ENCODE measurements at regions of chr13 and their contacts with region 1.

Region 1: GRCh38 chr13:26186118-26186870 is 35.8 kb downstream of the RNF6 start:
- DNase-seq: peak; percentile 88
- H3K4me3 Mint-ChIP-seq: peak overlapping the region; percentile 88
- H3K27ac Mint-ChIP-seq: peak overlapping the region; percentile 95
- H3K4me1 Mint-ChIP-seq: peaks cover 21% of the 10 kb centered on the region
- H3K27me3 Mint-ChIP-seq: no peaks in the 10 kb centered on the region

Region 2: GRCh38 chr13:25301347-25302047 is 884.8 kb before region 1 on chr13 and contains the start of gene NUP58:
- CTCF ChIA-PET with region 1: no interaction called
- intact Hi-C with region 1: loop called (anchors 1 kb)
- DNase-seq: peak; percentile 96
- H3K4me3 Mint-ChIP-seq: peak within 1 kb of the TSS; percentile 94
- H3K27ac Mint-ChIP-seq: peak within 1 kb of the TSS; percentile 93
- H3K4me1 Mint-ChIP-seq: peaks cover 40% of the 10 kb centered on the region
- H3K27me3 Mint-ChIP-seq: no peaks in the 10 kb centered on the region
- total RNA-seq, gene NUP58: 91.9 to 93.0 TPM

Region 3: DNA sequence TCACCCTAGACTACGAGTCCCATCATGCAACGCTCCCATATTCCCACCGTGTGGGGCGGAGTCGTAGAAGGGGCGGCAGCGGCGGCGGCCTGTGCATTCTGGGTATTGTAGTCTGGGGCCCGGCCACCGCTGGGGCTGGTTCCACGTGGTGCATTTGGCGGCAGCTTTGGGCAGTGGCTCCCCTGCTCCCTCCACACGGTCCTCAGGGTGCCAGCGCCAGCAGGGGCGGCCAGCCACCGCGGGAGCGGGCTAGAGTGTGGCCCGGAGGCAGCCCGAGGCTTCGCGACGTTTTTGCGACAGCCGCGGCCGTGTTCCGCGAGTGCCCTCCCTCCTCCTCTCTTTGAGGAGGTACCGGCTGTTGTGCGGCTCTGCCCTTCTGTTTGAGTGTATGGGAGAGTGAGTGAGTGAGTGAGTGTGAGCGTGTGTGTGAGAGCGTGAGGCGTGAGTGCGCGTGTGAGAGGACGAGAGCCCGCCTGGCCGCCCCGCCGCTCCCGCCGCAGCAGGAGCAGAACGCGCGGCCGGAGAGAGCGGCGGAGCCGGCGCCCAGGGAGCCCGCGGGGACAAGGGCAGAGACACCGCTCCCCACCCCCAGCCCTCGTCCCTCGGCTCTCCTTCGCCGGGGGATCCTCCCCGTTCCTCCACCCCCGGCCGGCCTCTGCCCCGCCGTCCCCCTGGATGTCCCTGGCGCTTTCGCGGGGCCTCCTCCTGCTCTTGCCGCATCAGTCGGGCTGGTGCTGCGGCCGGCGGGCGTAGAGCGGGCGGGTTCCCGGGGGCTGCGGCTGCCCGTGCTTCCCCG is 67.7 kb after region 1 on chr13 and contains the start of gene CDK8:
- CTCF ChIA-PET with region 1: interaction called, 4 read pairs
- intact Hi-C with region 1: loop called (anchors 1 kb)
- DNase-seq: peak; percentile 89
- H3K4me3 Mint-ChIP-seq: peak within 1 kb of the TSS; percentile 87
- H3K27ac Mint-ChIP-seq: peak within 1 kb of the TSS; percentile 54
- H3K4me1 Mint-ChIP-seq: peaks cover 36% of the 10 kb centered on the region
- H3K27me3 Mint-ChIP-seq: no peaks in the 10 kb centered on the region
- total RNA-seq, gene CDK8: 15.4 to 15.9 TPM

Region 4: GRCh38 chr13:26502826-26503225 is 316.5 kb after region 1 on chr13:
- CTCF ChIA-PET with region 1: interaction called, 12 read pairs
- intact Hi-C with region 1: loop called (anchors 1 kb)
- DNase-seq: peak; percentile 73
- H3K4me3 Mint-ChIP-seq: no peak overlapping the region
- H3K27ac Mint-ChIP-seq: peak overlapping the region; percentile 63
- H3K4me1 Mint-ChIP-seq: peaks cover 26% of the 10 kb centered on the region
- H3K27me3 Mint-ChIP-seq: no peaks in the 10 kb centered on the region

Region 5: GRCh38 chr13:26698392-26699196 is 512.3 kb after region 1 on chr13:
- CTCF ChIA-PET with region 1: interaction called, 63 read pairs
- intact Hi-C with region 1: loop called (anchors 1 kb)
- DNase-seq: peak; percentile 88
- H3K4me3 Mint-ChIP-seq: no peak overlapping the region
- H3K27ac Mint-ChIP-seq: no peak overlapping the region
- H3K4me1 Mint-ChIP-seq: peaks cover 4% of the 10 kb centered on the region
- H3K27me3 Mint-ChIP-seq: no peaks in the 10 kb centered on the region

Region 6: DNA sequence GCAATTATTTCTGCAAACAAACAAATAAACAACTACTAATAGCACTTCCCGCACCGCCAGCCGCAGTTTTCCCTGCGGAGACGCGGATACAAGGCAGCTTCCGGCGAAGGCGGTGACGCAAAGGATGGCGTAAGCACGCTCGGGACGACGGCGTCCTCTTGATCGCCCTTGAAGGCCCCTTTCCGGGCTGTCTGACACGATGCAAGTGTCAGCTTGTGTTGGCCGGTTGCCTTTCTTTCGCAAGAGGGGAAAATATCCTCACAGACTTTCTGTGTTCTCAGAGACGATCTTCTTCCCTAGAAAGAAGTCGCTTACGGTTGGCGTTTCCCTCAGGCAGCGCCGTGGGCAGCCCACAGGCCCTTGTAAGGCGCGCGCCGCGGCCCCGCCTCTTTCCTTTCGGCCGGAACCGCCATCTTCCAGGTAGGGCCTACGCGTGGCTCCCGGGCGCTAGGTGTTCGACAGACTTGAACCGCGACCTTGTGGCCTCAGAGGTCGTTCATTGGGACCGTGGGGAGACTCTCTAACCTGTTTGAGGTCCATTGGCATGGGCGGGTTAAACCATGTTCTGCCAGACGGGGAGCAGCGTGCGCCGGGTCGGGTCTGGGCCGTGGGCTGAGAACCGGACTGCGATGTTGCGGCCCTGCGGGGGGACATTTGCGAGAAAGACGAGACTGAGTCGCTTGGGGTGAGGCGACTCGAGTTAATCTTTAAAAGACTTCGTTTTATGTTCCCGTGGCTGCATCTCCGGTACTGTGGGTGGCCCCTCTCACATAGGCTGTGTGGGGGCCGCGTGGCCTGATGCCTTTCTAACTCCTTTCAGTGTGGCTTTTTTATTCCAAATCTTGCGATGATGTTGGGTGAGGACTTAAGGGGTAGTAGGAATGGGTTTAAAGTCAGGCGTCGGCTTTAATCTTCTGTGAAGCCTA is 1065.1 kb after region 1 on chr13 and contains the start of gene RPL21:
- CTCF ChIA-PET with region 1: no interaction called
- intact Hi-C with region 1: loop called (anchors 1 kb)
- DNase-seq: peak; percentile 94
- H3K4me3 Mint-ChIP-seq: peak within 1 kb of the TSS; percentile 99
- H3K27ac Mint-ChIP-seq: peak within 1 kb of the TSS; percentile 99
- H3K4me1 Mint-ChIP-seq: peaks cover 43% of the 10 kb centered on the region
- H3K27me3 Mint-ChIP-seq: no peaks in the 10 kb centered on the region
- total RNA-seq, gene RPL21: 1,766 to 1,839 TPM

Region 7: GRCh38 chr13:27851049-27851850 is 1665.0 kb after region 1 on chr13:
- CTCF ChIA-PET with region 1: no interaction called
- intact Hi-C with region 1: no loop called
- DNase-seq: no peak
- H3K4me3 Mint-ChIP-seq: no peak overlapping the region
- H3K27ac Mint-ChIP-seq: no peak overlapping the region
- H3K4me1 Mint-ChIP-seq: no peaks in the 10 kb centered on the region
- H3K27me3 Mint-ChIP-seq: peaks cover 25% of the 10 kb centered on the region